ENCODE measurements at regions of chr17 and their contacts with region 1.

Region 1: GRCh38 chr17:21511363-21512198 is 135.4 kb downstream of the KCNJ12 start:
- DNase-seq: peak; percentile 71 to 88 (median 83)
- H3K4me3 ChIP-seq: peak overlapping the region in 2 of 4 donors; percentile 0 to 47
- H3K27ac ChIP-seq: peak overlapping the region in 1 of 5 donors; percentile 43
- H3K4me1 ChIP-seq: peaks cover 0 to 8% of the 10 kb centered on the region in 2 donors
- H3K27me3 ChIP-seq: no peaks in the 10 kb centered on the region
- CTCF ChIP-seq: peak; percentile 33 to 77 (median 66)
- POLR2A ChIP-seq: no peak

Region 2: GRCh38 chr17:21126645-21127510 is 384.7 kb before region 1 on chr17 and contains the start of gene DHRS7B:
- intact Hi-C with region 1: loop called in 1 of 2 experiments (anchors 5 kb)
- DNase-seq: peak; percentile 94 to 98 (median 96)
- H3K4me3 ChIP-seq: peak within 1 kb of the TSS; percentile 0 to 97 (median 46)
- H3K27ac ChIP-seq: peak within 1 kb of the TSS; percentile 73 to 91 (median 87)
- H3K4me1 ChIP-seq: peaks cover 6 to 17% of the 10 kb centered on the region in 2 donors
- H3K27me3 ChIP-seq: no peaks in the 10 kb centered on the region
- CTCF ChIP-seq: no peak
- POLR2A ChIP-seq: peak in 1 of 2 donors; percentile 57
- total RNA-seq, gene DHRS7B: 18.0 to 68.5 (median 35.6) TPM

Region 3: DNA sequence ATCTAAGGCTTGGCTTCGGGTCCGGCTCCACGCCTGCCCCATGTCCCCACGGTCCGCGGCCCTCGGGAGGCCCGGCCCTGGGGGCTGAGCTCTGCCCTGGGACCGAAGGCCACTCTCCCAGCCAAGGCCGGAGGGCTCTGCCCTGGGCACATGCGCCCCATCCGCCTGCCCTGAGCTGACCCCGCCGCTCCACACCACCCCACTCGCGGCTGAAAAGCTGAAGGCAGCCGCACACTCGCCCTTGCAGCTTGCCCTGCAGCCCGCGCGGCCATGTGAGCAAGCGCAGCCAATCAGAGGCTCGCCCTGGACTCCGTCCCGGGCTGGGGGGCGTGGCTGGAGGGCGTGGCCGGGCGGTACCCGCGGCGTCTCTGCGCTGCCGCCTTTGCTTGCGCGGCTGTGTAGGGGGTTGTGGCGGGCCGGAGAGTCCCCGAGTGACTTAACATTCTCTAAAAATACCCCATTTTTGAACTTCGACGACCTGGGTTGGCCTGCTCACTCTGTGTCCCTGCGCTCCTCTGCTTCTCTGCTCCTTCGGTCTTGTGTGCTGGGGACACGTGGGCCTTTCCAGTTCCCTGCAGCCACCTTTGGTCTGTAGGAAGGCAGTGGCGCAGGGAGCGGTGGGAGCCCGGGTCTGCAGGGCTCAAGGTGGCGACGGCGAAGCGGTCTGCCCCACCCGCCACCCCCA is 235.9 kb before region 1 on chr17:
- intact Hi-C with region 1: loop called in 1 of 2 experiments (anchors 5 kb)
- DNase-seq: peak; percentile 89 to 96 (median 95)
- H3K4me3 ChIP-seq: peak overlapping the region in 2 of 4 donors; percentile 35 to 50
- H3K27ac ChIP-seq: peak overlapping the region in 1 of 5 donors; percentile 11
- H3K4me1 ChIP-seq: peaks cover 0 to 12% of the 10 kb centered on the region in 2 donors
- H3K27me3 ChIP-seq: no peaks in the 10 kb centered on the region
- CTCF ChIP-seq: no peak
- POLR2A ChIP-seq: peak; percentile 21 to 49

Region 4: GRCh38 chr17:21353326-21354010 is 158.1 kb before region 1 on chr17:
- intact Hi-C with region 1: no loop called
- DNase-seq: peak in 1 of 7 donors; percentile 35
- H3K4me3 ChIP-seq: no peak overlapping the region
- H3K27ac ChIP-seq: no peak overlapping the region
- H3K4me1 ChIP-seq: no peaks in the 10 kb centered on the region
- H3K27me3 ChIP-seq: no peaks in the 10 kb centered on the region
- CTCF ChIP-seq: no peak
- POLR2A ChIP-seq: no peak

Region 5: DNA sequence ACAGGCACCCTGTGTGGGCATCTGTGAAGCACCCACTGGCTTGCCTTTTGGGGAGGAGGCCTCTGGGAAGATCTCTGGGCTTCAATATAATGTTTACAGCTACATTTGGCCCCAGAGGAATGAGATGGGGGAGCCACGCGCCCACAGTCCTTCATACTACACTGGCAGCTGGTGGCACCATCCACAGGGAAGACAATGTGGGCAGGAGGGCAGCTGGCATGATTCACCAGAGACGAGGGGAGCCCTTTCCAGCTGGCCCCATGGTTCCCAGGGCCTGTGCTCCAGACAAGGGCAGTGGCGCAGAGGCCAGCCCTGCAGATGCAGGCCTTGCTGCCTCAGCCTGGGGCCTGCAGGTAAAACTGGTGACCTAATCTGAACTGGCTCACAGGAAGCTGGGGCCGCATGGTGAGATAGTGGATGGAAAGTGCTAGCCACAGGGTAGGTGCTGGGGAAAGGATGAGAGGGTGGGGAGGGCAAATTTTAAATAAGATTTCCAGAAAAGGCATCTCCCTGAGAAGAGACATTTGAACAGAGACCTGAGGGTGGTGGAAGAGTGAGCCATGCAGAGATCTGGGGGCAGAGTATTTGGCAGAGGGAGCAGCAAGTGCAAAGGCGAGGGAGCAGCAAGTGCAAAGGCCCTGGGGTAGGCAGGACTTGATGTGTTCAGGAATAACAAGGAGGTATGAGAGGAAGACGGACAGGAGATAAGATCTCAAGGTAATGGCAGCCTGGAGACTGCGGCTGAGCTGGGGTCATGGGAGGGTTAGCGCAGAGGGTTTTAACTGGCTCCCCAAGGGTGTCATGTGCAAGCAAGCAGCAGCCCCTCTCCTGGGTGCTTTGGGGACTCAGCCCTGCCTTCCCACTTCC is 147.6 kb before region 1 on chr17:
- intact Hi-C with region 1: no loop called
- DNase-seq: no peak
- H3K4me3 ChIP-seq: no peak overlapping the region
- H3K27ac ChIP-seq: no peak overlapping the region
- H3K4me1 ChIP-seq: no peaks in the 10 kb centered on the region
- H3K27me3 ChIP-seq: no peaks in the 10 kb centered on the region
- CTCF ChIP-seq: no peak
- POLR2A ChIP-seq: no peak

Region 6: DNA sequence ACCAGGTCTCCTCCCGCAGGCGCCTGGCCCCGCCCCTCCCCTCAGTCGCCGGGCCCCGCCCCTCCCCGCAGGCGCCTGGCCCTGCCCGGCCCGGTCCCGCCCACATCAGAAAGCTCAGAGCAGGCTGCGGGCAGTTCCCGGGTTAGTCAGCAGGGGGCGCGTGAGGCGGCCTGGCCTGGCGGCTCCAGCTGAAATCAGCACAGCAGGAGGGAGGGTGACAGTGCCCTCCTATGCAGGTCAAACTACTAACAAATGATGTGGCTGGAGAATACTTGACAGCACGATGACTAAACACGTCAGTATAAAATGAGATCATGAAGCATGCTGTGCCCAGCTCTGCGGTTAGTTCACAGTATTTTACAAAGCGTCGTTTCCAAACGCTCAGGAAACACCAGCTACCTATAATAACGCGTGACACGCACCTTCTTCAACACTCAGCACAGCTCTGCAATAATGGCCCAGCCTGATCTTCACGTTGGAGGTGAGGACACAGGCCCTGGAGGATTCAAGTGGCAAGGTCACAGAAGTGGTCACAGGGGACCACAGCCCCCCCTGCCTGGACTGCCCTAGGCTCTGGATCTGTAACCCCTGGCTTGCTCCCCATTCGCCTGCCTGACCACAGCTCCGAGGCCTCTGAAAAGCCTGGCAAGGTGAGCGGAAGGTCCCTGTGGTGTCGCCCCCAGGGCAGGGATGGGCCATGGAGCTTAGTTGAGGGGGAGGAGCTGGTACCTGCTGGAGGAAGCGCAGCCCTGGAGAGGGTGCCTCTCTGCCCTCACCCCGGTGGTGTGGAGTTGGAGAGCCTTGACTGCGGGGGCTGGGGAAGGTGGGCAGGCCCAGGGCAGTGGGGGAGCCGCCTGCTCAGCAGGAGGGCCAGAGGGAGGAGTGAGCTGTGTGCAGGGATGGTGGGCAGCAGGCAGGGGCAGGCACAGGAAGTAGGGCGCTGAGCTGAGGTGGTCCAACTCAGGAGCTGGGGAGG is 54.2 kb before region 1 on chr17:
- intact Hi-C with region 1: loop called (anchors 2 to 5 kb)
- DNase-seq: peak; percentile 86 to 96 (median 93)
- H3K4me3 ChIP-seq: no peak overlapping the region
- H3K27ac ChIP-seq: no peak overlapping the region
- H3K4me1 ChIP-seq: peaks cover 3 to 4% of the 10 kb centered on the region in 2 donors
- H3K27me3 ChIP-seq: no peaks in the 10 kb centered on the region
- CTCF ChIP-seq: peak; percentile 79 to 94 (median 88)
- POLR2A ChIP-seq: no peak

Measured in adrenal gland (tissue), 19 donors.